HCT116 (cell line): ENCODE measurements at regions of chr1 and their contacts with region 1.

Region 1: DNA sequence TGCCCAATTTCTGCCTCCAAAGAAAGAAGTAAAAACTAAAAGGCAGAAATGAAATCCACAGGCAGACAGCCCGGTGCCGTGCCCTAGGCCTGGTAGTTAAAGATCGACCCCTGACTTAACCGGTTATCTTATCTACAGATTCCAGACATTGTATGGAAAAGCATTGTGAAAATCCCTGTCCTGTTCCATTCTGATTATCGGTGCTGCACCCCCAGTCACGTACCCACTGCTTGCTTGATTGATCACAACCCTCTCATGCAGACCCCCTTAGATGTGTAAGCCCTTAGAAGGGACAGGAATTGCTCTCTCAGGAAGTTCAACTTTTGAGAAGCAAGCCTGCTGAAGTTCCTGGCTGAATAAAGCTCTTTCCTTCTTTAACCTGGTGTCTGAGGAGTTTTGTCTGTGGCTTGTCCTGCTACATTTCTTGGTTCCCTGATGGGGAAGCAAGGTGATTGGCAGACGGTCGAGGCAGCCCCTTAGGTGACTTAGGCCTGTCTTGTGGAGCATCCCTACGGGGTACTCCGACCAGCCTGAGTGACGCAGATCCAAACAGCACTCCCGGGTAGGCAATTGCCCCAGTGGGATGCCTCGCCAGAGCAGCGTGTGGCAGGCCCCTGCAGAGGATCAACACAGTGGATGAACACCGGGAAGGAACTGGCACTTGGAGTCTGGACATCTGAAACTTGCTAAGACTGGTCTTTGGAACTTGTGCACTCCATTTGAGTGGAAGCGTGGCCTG is 111.2 kb upstream of the PPM1J start:
- DNase-seq: no peak
- ATAC-seq: no peak
- H3K4me3 ChIP-seq: no peak overlapping the region
- H3K27ac ChIP-seq: no peak overlapping the region
- H3K4me1 ChIP-seq: no peaks in the 10 kb centered on the region
- H3K27me3 ChIP-seq: no peaks in the 10 kb centered on the region
- CTCF ChIP-seq: no peak
- POLR2A ChIP-seq: no peak
- RAD21 ChIP-seq: no peak

Region 2: GRCh38 chr1:112869895-112870294 is 43.5 kb after region 1 on chr1:
- CTCF ChIA-PET with region 1: no interaction called
- POLR2A ChIA-PET with region 1: no interaction called
- RAD21 ChIA-PET with region 1: no interaction called
- intact Hi-C with region 1: loop called (anchors 2 kb)
- DNase-seq: no peak
- ATAC-seq: no peak
- H3K4me3 ChIP-seq: no peak overlapping the region
- H3K27ac ChIP-seq: no peak overlapping the region
- H3K4me1 ChIP-seq: peaks cover 0 to 15% of the 10 kb centered on the region in 2 experiments; a peak in 2 of 4 replicates
- H3K27me3 ChIP-seq: no peaks in the 10 kb centered on the region
- CTCF ChIP-seq: no peak
- POLR2A ChIP-seq: no peak
- RAD21 ChIP-seq: no peak